Activated CD4-positive, alpha-beta T cell treated with anti-CD3 and anti-CD28 coated beads for 36 hours (primary cell): ENCODE measurements at regions of chr16 and their contacts with region 1.

Region 1: GRCh38 chr16:9134739-9135138 is 43.3 kb downstream of the HAPSTR1 start:
- DNase-seq: peak; percentile 83
- ATAC-seq: peak; percentile 88
- H3K4me3 Mint-ChIP-seq: no peak overlapping the region
- H3K27ac Mint-ChIP-seq: no peak overlapping the region
- H3K4me1 Mint-ChIP-seq: peaks cover 24% of the 10 kb centered on the region
- H3K27me3 Mint-ChIP-seq: no peaks in the 10 kb centered on the region

Region 2: GRCh38 chr16:7615565-7615964 is 1519.2 kb before region 1 on chr16:
- CTCF ChIA-PET with region 1: no interaction called
- POLR2A ChIA-PET with region 1: no interaction called
- intact Hi-C with region 1: no loop called
- DNase-seq: no peak
- ATAC-seq: no peak
- H3K4me3 Mint-ChIP-seq: no peak overlapping the region
- H3K27ac Mint-ChIP-seq: no peak overlapping the region
- H3K4me1 Mint-ChIP-seq: no peaks in the 10 kb centered on the region
- H3K27me3 Mint-ChIP-seq: no peaks in the 10 kb centered on the region

Region 3: DNA sequence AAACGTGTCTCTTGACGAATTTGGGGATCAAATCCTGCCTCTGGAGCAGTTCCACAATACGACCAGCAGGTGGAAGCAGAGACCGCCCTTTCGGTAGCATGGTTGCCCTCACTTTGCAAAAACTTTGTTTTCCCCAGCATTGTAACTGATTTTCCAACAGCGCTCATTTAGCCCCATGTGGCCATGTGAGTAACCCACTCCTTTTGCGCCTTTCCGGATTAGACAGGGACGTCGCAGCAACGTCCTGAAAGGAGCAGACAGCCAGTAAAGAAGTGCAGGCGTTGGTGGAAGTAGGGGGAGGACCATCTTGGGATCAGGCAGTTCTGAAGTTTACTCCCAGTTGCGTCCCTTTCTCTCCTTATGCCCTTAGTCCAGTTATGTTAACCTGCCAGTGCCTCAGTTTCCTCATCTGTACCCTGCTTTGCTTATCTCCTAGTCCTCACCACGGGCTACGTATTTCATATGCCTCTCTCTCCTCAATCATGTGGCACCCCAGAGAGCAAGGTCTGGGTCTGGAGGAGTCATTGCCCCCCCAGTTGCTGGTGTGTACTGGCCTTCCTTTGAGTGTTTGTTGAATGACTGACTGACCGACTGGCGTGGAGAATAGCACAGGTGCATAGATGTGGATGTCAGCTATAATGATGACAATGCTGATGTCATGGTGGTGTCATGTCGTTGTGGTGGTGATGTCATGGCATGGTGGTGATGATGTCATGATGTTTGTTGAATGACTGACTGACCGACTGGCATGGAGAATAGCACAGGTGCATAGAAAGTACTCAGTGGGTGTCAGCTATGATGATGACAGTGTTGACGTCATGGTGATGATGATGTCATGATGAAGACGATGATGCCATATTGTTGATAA is 566.8 kb before region 1 on chr16:
- CTCF ChIA-PET with region 1: no interaction called
- POLR2A ChIA-PET with region 1: no interaction called
- intact Hi-C with region 1: loop called in 1 of 2 experiments (anchors 1 kb)
- DNase-seq: peak; percentile 87
- ATAC-seq: peak; percentile 94
- H3K4me3 Mint-ChIP-seq: no peak overlapping the region
- H3K27ac Mint-ChIP-seq: no peak overlapping the region
- H3K4me1 Mint-ChIP-seq: peaks cover 4% of the 10 kb centered on the region
- H3K27me3 Mint-ChIP-seq: peaks cover 9% of the 10 kb centered on the region

Region 4: GRCh38 chr16:8905168-8905762 is 229.5 kb before region 1 on chr16:
- CTCF ChIA-PET with region 1: interaction called, 5 read pairs
- POLR2A ChIA-PET with region 1: no interaction called
- intact Hi-C with region 1: loop called in 1 of 2 experiments (anchors 1 kb)
- DNase-seq: no peak
- ATAC-seq: peak; percentile 78
- H3K4me3 Mint-ChIP-seq: no peak overlapping the region
- H3K27ac Mint-ChIP-seq: peak overlapping the region; percentile 25
- H3K4me1 Mint-ChIP-seq: peaks cover 13% of the 10 kb centered on the region
- H3K27me3 Mint-ChIP-seq: no peaks in the 10 kb centered on the region

Region 5: GRCh38 chr16:9008601-9009260 is 126.0 kb before region 1 on chr16:
- CTCF ChIA-PET with region 1: interaction called, 27 read pairs
- POLR2A ChIA-PET with region 1: no interaction called
- intact Hi-C with region 1: loop called in 1 of 2 experiments (anchors 1 kb)
- DNase-seq: peak; percentile 84
- ATAC-seq: peak; percentile 96
- H3K4me3 Mint-ChIP-seq: no peak overlapping the region
- H3K27ac Mint-ChIP-seq: no peak overlapping the region
- H3K4me1 Mint-ChIP-seq: peaks cover 4% of the 10 kb centered on the region
- H3K27me3 Mint-ChIP-seq: peaks cover 10% of the 10 kb centered on the region

Region 6: DNA sequence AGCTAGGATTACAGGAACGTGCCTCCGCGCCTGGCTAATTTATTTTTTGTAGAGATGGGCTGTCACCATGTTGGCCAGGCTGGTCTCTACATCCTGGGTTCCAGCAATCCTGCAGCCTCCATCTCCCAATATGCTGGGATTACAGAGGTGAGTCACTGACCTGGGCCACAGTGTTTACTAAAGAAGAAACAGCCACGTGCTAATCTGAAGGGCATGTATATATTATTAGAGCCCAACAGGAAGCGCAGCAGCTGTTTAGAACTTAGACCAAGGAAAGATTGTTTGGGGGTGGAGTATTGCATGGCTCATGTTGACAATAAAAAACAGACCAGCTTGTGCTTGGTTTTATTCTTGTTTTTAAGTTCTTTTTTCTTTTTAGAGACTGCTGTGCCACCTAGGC is 16.9 kb after region 1 on chr16:
- CTCF ChIA-PET with region 1: interaction called, 14 read pairs
- POLR2A ChIA-PET with region 1: no interaction called
- intact Hi-C with region 1: no loop called
- DNase-seq: no peak
- ATAC-seq: no peak
- H3K4me3 Mint-ChIP-seq: no peak overlapping the region
- H3K27ac Mint-ChIP-seq: no peak overlapping the region
- H3K4me1 Mint-ChIP-seq: no peaks in the 10 kb centered on the region
- H3K27me3 Mint-ChIP-seq: peaks cover 20% of the 10 kb centered on the region

Region 7: DNA sequence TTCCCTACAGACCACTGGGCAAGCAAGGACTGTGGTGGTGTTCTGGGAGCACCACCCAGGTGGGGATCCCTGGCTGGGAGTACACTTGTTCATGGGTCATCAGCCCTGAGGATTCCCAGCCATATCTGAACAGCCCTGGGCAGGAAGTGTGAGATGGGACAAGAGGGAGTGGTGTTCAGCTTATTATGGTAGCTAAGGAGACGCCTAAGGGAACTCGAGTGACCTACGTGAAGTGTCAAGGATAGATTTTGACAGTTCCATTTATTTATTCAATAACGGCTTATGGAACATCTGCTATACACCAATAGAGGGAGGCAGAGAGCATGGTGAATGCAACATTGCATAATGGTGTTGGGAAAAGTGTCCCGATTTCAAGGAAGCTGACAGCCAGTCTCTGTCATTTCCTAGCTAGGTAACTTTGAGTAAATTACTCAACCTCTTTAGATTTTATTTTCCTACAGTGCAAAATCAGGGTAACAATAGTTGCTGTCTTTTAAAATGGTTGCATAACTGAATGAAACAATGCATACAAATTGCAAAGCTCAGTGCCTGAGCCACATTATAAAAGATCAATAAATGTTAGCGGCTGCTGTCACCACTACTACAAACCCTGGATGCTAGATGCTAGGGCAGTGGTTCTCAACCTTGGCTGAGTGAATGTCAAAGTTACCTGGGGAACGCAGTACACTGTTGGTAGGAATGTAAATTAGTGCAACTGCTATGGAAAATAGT is 513.4 kb after region 1 on chr16:
- CTCF ChIA-PET with region 1: no interaction called
- POLR2A ChIA-PET with region 1: no interaction called
- intact Hi-C with region 1: no loop called
- DNase-seq: no peak
- ATAC-seq: no peak
- H3K4me3 Mint-ChIP-seq: no peak overlapping the region
- H3K27ac Mint-ChIP-seq: no peak overlapping the region
- H3K4me1 Mint-ChIP-seq: no peaks in the 10 kb centered on the region
- H3K27me3 Mint-ChIP-seq: peaks cover 5% of the 10 kb centered on the region

Region 8: DNA sequence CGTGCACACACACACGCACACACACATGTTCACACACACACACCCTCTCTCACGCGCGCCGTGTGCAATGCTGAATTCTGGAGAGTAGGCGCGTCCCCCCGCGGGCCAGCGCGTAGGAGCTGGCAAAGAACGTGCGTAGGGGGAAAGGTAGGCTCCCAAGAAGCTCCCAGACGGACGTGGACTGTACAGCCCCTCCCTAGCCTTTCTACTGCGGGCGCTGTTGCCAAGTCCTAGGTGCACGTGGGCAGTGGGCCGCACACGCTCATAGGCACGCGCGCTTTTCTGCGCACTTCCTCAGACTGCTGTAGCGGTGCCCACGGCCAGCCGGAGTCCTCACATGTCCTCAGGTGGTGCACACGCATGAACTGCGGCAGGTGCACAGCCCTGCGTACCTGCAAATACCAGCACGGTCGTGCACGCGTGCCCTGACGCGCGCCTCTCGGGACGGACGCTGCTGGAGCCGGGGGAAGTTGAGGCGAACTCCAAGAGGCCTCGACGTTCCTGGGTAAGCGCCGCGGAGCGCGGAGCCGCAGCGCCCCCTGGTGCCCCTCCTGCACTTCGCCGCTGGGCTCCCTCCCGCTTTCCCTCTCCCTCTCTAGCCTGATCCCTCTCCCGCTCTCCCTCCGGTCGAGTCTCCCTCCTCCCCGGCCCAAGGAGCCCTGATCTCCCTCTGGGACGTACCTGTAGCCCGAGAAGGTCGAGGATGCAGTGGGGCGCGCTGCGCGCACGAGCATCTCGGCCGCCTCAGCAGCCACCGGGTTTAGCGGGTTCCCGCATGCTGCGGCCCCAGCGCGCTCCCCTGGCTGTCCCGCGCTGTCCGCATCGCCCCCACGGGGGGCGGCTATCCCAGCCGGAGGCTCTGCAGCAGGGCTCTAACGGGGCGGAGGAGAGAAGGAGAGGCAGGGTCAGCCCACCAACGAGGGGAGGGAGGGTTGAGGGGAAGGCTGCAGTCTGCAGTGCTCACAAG is 1046.7 kb after region 1 on chr16:
- CTCF ChIA-PET with region 1: interaction called, 6 read pairs
- POLR2A ChIA-PET with region 1: no interaction called
- intact Hi-C with region 1: loop called (anchors 1 to 10 kb)
- DNase-seq: peak; percentile 74
- ATAC-seq: peak; percentile 71
- H3K4me3 Mint-ChIP-seq: no peak overlapping the region
- H3K27ac Mint-ChIP-seq: no peak overlapping the region
- H3K4me1 Mint-ChIP-seq: peaks cover 11% of the 10 kb centered on the region
- H3K27me3 Mint-ChIP-seq: peaks cover 52% of the 10 kb centered on the region